ENCODE measurements at regions of chr6 and their contacts with region 1.

Region 1: DNA sequence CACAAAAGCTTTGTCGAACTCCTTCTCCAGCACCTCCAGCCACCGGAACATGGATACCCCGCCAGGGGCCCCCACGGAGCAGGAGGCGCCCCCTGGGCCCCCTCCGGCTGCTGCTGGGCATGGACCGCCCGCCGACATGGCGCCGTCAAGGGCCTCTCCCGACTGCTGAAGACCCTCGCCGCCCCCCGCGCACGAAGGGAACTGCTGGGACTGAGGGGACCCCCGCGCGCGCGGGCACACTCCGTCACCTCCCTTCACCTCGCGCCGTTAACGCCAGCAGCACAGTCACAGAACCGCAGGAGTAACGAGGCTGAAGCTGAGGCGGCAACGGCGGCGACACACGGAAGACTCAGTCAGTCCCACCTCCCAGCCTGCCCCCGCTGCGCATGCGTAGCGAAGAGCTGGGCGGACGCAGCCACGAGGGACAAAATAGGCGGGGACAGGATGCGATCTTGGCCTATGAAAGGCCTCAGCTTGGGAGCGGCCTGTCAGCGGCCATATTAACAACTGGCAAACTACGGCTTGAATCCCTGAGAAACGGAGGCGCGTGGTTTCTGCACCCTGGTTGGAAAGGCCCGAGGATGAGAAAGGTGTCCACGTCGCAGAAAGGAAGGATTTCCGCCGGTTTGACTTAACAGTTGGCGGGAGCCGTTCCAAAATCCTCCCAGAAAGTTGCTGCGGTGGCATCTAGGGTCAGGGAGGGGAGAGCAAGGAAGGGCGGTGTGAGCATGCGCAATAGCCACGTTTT is at the start of gene GOPC:
- ATAC-seq: peak; percentile 95 to 98 (median 97)
- H3K4me3 ChIP-seq: peak within 1 kb of the TSS; percentile 79 to 94 (median 83)
- H3K27ac ChIP-seq: peak within 1 kb of the TSS; percentile 94 to 95
- H3K4me1 ChIP-seq: peaks cover 5 to 19% of the 10 kb centered on the region in 2 donors
- total RNA-seq, gene GOPC: 34.9 to 48.5 (median 40.3) TPM

Region 2: DNA sequence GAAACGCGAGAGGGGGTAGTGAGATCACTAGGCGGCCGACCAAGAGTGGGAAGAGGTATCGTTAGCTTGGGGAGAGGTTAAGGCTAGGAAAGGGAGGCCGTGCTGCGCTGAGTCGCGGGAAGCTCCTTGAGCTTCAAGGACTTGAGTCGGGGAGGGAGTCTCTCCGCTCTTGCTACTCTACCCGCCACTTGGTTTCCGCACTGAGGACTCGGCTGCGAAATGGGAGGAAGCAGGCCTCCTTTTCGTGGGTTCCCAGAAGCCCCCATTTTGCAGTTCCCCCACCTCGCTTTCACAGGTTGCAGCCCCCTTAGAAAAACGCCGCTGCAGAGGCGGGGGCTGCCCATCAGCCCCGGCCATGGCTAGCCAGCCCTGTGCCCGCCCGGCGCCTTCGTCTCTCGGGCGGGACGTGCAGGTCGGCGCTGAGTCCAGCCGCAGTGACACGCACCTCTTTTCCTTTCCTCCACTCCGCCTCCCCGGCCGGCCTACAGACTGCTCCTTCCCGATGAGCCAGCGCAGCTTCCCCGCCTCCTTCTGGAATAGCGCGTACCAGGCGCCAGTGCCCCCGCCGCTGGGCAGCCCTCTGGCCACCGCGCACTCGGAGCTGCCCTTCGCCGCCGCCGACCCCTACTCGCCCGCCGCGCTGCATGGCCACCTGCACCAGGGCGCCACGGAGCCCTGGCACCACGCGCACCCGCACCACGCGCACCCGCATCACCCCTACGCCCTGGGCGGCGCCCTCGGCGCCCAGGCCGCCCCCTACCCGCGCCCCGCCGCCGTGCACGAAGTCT is 332.1 kb before region 1 on chr6:
- in situ Hi-C with region 1: no loop called
- ATAC-seq: peak in 6 of 8 experiments; percentile 22 to 67 (median 64)
- H3K4me3 ChIP-seq: peak overlapping the region; percentile 14 to 39 (median 29)
- H3K27ac ChIP-seq: no peak overlapping the region
- H3K4me1 ChIP-seq: peaks cover 4 to 16% of the 10 kb centered on the region in 2 donors

Region 3: GRCh38 chr6:117352466-117353081 is 249.8 kb before region 1 on chr6:
- in situ Hi-C with region 1: loop called in 1 of 9 experiments (anchors 25 kb)
- ATAC-seq: peak in 2 of 8 experiments; percentile 24 to 27
- H3K4me3 ChIP-seq: no peak overlapping the region
- H3K27ac ChIP-seq: no peak overlapping the region
- H3K4me1 ChIP-seq: no peaks in the 10 kb centered on the region

Measured in motor neuron (in vitro differentiated cells).